Posterior vena cava (tissue), 2 donors: ENCODE measurements at regions of chr2 and their contacts with region 1.

Region 1: DNA sequence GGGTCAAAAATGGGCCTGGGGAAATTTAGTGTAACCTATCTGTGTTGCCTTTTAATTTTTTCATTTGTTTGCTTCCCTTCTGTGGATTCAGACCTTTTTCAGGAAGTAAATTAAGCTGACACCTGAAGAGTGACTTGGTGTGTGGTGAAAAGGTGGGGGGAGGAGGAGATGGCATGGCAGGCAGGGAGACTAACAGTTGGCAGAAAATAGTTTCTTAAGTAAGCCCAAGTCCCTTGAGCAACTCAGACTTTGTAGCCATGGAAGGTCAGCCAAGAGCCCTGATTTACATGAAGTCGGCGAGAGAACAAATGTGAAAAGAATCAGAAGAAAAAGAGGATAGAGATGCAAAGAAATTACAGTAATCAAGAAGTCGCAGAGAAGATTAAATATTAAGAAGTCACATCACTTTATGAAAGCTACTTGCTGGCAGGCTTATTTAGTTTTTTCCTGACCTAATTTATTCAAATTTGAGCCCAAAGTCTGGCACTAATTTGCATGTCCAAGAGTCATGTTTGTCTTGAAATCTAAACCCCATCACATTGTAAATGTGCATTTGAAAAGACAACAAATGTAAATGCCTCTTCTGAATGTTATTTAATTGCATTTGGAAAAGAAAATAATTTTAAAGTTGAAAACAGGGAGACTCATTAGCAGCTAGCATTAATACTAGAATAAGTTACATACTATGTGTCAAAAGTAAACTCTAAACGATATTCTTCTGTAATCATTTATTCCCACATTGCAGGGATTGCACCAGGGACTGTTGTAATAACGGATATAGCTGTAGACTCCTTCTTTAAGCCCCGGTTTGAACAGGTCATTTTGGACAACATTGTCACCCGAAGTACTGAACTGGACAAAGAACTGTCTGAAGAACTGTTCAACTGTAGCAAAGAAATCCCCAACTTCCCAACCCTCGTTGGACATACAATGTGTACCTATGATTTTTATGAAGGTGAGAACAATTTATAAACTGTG is 19.3 kb downstream of the UPP2 start:
- DNase-seq: no peak

Region 2: GRCh38 chr2:156883812-156884211 is 1237.1 kb before region 1 on chr2:
- intact Hi-C with region 1: loop called in 1 of 2 experiments (anchors 5 kb)
- DNase-seq: no peak